Activated naive CD8-positive, alpha-beta T cell treated with anti-CD3 and anti-CD28 coated beads, Interleukin-2, amount 10 ng/mL, durations not matched to agents 7 days and 5 days (primary cell): ENCODE measurements at regions of chr16 and their contacts with region 1.

Region 1: GRCh38 chr16:66830422-66831404 is at the start of gene NAE1:
- DNase-seq: peak; percentile 98
- ATAC-seq: peak; percentile 94
- H3K4me3 Mint-ChIP-seq: peak within 1 kb of the TSS; percentile 73
- H3K27ac Mint-ChIP-seq: peak within 1 kb of the TSS; percentile 56
- H3K4me1 Mint-ChIP-seq: peaks cover 31% of the 10 kb centered on the region
- H3K27me3 Mint-ChIP-seq: peaks cover 6% of the 10 kb centered on the region
- total RNA-seq, gene NAE1: 70.7 to 77.0 TPM

Region 2: DNA sequence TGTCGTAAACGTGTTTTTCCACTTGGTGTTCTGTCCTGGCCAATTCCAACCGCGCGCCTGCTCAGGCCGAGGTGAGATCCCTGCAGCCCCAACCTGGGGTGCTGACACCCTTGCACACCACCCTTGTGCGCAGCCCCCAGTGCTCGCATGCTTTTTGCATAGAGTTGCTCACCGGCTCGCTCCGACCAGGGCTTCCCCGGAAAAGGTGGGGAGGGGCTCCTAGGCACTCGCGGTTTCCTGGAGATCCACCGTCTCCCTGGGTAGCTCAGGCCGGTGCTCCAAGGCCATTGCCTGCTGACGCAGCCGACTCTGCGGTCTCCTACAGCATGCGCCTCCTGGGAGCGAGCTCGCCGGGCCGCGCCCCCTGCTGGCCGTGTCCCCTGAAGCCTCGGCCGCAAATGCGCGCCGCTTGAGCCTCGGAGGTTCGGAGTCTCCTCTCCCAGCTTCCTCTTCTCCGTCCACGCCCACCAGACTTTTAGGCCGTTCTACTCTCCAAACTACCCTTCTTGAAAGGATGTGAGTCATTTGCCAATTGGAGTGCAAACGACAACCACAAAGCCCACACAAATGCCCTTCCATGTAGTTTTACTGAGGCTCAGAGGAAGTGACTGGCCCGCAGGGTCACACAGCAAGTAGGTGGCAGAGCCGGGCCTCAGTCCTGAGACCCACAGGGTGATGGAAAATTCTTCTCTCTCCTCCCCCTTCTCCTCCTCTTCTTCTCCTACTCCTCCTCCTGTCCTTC is 42.4 kb after region 1 on chr16:
- POLR2A ChIA-PET with region 1: interaction called, 39 read pairs
- DNase-seq: peak; percentile 96
- ATAC-seq: peak; percentile 92
- H3K4me3 Mint-ChIP-seq: peak overlapping the region; percentile 83
- H3K27ac Mint-ChIP-seq: peak overlapping the region; percentile 93
- H3K4me1 Mint-ChIP-seq: peaks cover 26% of the 10 kb centered on the region
- H3K27me3 Mint-ChIP-seq: no peaks in the 10 kb centered on the region